K562 (cell line): ENCODE measurements at regions of chr2 and their contacts with region 1.

Region 1: GRCh38 chr2:68909793-68910674 is 38.8 kb upstream of the BMP10 start:
- DNase-seq: peak; percentile 70 to 82 (median 72)
- ATAC-seq: peak; percentile 78
- H3K4me3 ChIP-seq: no peak overlapping the region
- H3K27ac ChIP-seq: peak overlapping the region; percentile 3; the same call in 1 of the 3 replicates
- H3K4me1 ChIP-seq: peaks cover 18 to 65% of the 10 kb centered on the region in 2 experiments
- H3K27me3 ChIP-seq: no peaks in the 10 kb centered on the region
- CTCF ChIP-seq: peak; percentile 79 to 86 (median 80)
- EP300 ChIP-seq: no peak; the same call in 1 of the 2 replicates
- POLR2A ChIP-seq: no peak
- RAD21 ChIP-seq: peak; percentile 70 to 94

Region 2: GRCh38 chr2:68632021-68632420 is 278.0 kb before region 1 on chr2:
- CTCF ChIA-PET with region 1: no interaction called
- POLR2A ChIA-PET with region 1: no interaction called
- in situ Hi-C with region 1: no loop called
- intact Hi-C with region 1: no loop called
- DNase-seq: peak in 1 of 4 experiments; percentile 19
- ATAC-seq: no peak
- H3K4me3 ChIP-seq: no peak overlapping the region
- H3K27ac ChIP-seq: no peak overlapping the region
- H3K4me1 ChIP-seq: no peaks in the 10 kb centered on the region
- H3K27me3 ChIP-seq: no peaks in the 10 kb centered on the region
- CTCF ChIP-seq: no peak
- EP300 ChIP-seq: no peak
- POLR2A ChIP-seq: no peak
- RAD21 ChIP-seq: no peak

Region 3: DNA sequence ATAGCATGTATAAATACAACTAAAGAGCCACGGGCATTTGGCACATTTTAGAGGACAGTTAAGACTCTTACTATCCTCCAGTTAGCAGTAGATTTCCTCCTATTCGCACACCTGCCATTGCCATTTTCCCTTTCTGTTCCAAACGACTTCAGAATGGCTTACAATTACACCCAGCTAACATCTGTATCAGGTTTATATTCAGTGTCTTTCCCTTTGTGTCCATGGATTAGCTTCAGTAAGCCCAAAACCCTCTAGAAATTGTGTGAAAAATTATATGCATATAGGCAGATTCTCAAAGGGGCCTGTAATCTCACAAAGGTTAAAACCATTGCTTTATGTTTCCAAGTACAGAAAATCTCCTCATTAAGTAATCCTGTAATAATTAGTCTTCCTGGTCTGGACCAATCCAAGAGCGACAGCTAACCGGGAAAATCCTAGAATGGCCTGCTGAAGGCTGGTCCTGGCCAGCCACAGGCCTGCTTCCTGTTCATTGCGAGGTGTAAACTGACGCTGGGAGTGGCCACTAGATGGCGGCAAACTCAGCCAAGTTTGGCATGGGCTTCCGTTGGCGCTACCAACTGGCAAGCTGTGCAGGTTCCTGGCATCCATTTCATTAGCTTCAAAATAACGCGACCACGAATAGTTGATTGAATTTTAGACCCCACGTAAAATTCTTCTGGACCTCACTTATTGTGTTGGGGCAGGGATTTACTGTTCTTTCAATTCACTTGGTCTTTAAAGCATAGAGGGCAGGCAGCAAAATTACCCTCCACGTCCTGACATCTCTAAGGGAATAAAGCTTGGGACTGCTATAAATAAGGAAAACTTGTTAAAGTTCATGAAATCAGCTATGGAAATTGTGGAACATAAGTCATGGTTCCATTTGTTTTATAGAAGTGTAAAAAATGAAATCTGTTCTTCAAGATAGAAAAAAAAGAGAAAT is 158.4 kb before region 1 on chr2:
- CTCF ChIA-PET with region 1: no interaction called
- POLR2A ChIA-PET with region 1: no interaction called
- in situ Hi-C with region 1: no loop called
- intact Hi-C with region 1: loop called (anchors 2 kb)
- DNase-seq: peak; percentile 76 to 87 (median 77)
- ATAC-seq: peak; percentile 98
- H3K4me3 ChIP-seq: no peak overlapping the region
- H3K27ac ChIP-seq: no peak overlapping the region
- H3K4me1 ChIP-seq: peaks cover 0 to 12% of the 10 kb centered on the region in 2 experiments; a peak in 2 of 5 replicates
- H3K27me3 ChIP-seq: no peaks in the 10 kb centered on the region
- CTCF ChIP-seq: peak; percentile 91 to 95 (median 95)
- EP300 ChIP-seq: no peak
- POLR2A ChIP-seq: no peak
- RAD21 ChIP-seq: peak; percentile 91 to 95

Region 4: GRCh38 chr2:68811364-68811763 is 98.7 kb before region 1 on chr2:
- CTCF ChIA-PET with region 1: no interaction called
- POLR2A ChIA-PET with region 1: no interaction called
- in situ Hi-C with region 1: no loop called
- intact Hi-C with region 1: loop called (anchors 1 kb)
- DNase-seq: no peak
- ATAC-seq: no peak
- H3K4me3 ChIP-seq: no peak overlapping the region
- H3K27ac ChIP-seq: no peak overlapping the region
- H3K4me1 ChIP-seq: peaks cover 0 to 5% of the 10 kb centered on the region in 2 experiments; a peak in 2 of 5 replicates
- H3K27me3 ChIP-seq: no peaks in the 10 kb centered on the region
- CTCF ChIP-seq: no peak
- EP300 ChIP-seq: no peak
- POLR2A ChIP-seq: no peak
- RAD21 ChIP-seq: no peak

Region 5: GRCh38 chr2:68839260-68839833 is 70.7 kb before region 1 on chr2:
- CTCF ChIA-PET with region 1: no interaction called
- POLR2A ChIA-PET with region 1: no interaction called
- in situ Hi-C with region 1: no loop called
- intact Hi-C with region 1: loop called (anchors 1 kb)
- DNase-seq: peak; percentile 46 to 63 (median 59)
- ATAC-seq: peak; percentile 56
- H3K4me3 ChIP-seq: no peak overlapping the region
- H3K27ac ChIP-seq: no peak overlapping the region
- H3K4me1 ChIP-seq: peaks cover 5 to 11% of the 10 kb centered on the region in 2 experiments; a peak in 4 of 5 replicates
- H3K27me3 ChIP-seq: no peaks in the 10 kb centered on the region
- CTCF ChIP-seq: peak; percentile 84 to 89 (median 86)
- EP300 ChIP-seq: peak; percentile 37; the same call in 1 of the 2 replicates
- POLR2A ChIP-seq: no peak
- RAD21 ChIP-seq: peak; percentile 91 to 99

Region 6: DNA sequence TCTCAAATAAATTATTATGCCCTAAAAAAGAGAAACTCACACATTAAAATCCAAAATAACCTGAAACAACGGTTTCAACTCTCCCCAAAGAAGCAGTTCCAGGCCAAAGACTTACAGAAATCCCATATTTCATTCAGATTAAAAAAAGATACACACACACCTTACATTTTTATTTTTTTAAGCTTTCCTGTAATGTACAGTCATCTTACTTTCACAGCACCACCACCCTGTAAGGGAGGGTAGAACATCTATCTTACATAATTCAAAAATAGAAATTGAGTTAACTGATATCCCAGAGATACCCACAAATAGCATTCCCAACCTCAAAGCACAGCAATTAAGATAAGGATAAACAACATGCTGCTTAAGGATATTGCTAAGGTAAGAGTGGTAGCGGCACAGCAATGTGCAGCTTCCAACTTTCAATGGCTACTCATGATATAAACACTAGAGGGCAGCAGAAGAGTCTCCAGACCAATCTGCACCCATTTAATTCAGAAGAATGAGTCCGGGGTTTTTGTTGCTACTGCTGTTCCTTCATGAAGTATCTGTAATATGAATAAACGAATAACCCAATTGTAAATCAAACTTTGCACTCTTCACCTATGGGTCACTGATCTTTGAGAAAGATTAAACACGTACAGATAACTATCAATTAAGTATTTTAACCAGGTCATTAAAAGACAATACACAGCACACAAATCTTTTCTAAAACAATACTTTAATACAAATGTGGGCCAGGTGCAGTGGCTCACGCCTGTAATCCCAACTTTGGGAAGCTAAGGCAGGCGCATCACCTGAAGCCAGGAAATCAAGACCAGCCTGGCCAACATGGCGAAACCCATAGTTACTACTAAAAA is 465.7 kb after region 1 on chr2:
- CTCF ChIA-PET with region 1: no interaction called
- POLR2A ChIA-PET with region 1: no interaction called
- in situ Hi-C with region 1: no loop called
- intact Hi-C with region 1: no loop called
- DNase-seq: peak; percentile 39 to 68 (median 52)
- ATAC-seq: peak; percentile 85
- H3K4me3 ChIP-seq: no peak overlapping the region
- H3K27ac ChIP-seq: 0 out of 3 replicates have a peak overlapping the region, but pooled peaks have one; percentile 14
- H3K4me1 ChIP-seq: peaks cover 0 to 5% of the 10 kb centered on the region in 2 experiments; a peak in 2 of 5 replicates
- H3K27me3 ChIP-seq: no peaks in the 10 kb centered on the region
- CTCF ChIP-seq: peak; percentile 73 to 83 (median 75)
- EP300 ChIP-seq: no peak
- POLR2A ChIP-seq: no peak
- RAD21 ChIP-seq: peak; percentile 52 to 73